Posterior cingulate gyrus (tissue), 11 donors: ENCODE measurements at regions of chr1 and their contacts with region 1.

Region 1: DNA sequence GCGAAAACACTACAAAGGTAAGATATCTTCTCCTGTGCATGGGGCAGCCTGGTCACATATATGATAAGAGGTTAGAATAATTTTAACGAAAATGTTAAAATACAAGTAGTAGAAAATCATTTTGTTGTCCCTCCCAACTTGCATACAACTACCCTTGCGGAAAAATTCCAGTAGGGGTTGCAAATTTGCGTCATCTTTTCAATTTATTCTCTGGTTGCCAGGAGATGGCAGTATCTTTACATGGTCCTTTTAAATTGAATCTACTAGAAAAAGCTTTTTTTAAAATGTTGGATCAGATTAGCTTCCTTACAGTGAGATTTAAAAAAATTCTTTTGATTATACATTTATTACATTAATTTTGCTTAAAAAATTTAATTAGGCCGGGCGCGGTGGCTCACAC is 10.9 kb downstream of the S100PBP start:
- DNase-seq: no peak

Region 2: DNA sequence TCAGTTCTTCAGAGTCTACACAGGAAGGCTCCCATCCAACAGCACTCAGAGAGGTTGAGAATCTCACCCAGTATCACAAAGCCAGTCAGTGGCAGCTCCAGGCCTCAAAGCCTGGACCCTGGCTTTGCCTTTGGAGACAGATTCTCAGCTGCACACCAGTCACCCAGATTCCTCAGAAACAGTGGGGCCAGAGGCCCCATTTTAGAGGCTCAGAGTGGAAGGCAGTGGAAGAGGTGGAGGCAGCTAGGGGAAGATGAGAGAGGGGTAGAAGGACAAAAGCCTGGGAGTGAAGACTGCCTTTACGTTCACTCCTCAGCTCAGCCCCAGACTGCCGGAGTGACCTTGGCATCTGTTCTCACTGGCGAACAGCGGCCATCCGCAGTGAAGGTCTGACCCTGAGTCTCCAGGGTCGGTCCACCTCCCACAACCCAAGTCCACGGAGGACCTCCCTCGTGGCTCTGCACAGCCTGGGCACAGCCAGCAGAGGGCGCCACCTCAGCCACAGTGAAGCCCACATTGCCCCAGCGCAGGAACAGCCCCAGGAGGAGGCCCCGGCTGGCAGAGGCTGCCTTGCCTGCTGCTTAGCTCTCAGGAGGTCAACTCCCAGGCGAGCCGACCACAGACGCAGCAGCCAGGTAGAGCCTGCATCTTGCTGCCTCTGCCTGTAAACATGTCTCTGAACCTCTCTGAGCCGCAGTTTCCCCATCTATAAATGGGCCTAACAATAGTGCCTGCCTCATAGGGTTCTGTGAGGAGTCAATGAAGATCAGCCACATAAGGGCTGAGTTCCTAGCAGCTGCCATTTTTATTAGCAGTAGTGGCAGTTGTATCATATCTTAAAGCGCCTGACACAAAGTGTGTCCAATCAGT is 48.2 kb after region 1 on chr1:
- intact Hi-C with region 1: loop called (anchors 1 kb)
- DNase-seq: peak in 8 of 10 donors; percentile 49 to 92 (median 66)

Region 3: GRCh38 chr1:33080885-33081553 is 252.7 kb after region 1 on chr1 and contains the start of gene AZIN2:
- intact Hi-C with region 1: loop called (anchors 10 kb)
- DNase-seq: peak; percentile 97 to 100 (median 100)